T-cell (primary cell): ENCODE measurements at regions of chr11 and their contacts with region 1.

Region 1: DNA sequence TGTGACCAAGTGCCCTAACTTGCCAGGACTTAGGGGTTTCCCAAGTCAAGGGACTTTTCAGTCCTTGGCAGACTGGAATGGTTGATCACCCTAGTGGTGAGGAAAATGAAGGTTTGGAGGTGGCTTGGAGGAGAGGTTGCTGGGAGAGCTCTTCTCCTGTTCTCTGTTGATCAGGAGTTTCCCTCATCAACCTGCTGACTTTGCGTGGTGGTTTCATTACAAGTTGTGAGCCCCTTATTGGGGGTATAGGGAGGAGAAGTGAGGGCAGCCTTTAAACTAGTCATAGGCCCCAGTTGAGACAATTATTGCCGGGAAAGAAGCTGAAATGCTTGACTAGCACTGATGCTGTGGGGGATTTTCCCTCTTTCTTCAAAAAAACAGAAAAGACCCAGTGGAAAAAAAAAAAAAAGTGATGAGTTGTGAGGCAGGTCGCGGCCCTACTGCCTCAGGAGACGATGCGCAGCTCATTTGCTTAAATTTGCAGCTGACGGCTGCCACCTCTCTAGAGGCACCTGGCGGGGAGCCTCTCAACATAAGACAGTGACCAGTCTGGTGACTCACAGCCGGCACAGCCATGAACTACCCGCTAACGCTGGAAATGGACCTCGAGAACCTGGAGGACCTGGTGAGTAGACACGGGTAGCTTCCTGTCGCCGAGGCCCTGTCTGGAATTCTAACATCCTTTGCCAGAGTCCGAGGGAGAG is at the start of gene CXCR5:
- DNase-seq: peak in 6 of 35 experiments; percentile 15 to 68 (median 40)
- ATAC-seq: peak; percentile 32 to 72 (median 52)
- H3K4me3 ChIP-seq: peak within 1 kb of the TSS in 1 of 2 donors; percentile 46
- H3K4me3 Mint-ChIP-seq: peak within 1 kb of the TSS; percentile 68 to 79 (median 77)
- H3K27ac ChIP-seq: peak within 1 kb of the TSS; percentile 75
- H3K27ac Mint-ChIP-seq: peak within 1 kb of the TSS; percentile 82 to 88
- H3K4me1 ChIP-seq: peaks cover 30 to 85% of the 10 kb centered on the region in 2 experiments
- H3K4me1 Mint-ChIP-seq: peaks cover 74 to 81% (median 75%) of the 10 kb centered on the region in 3 donors
- H3K27me3 ChIP-seq: no peaks in the 10 kb centered on the region
- H3K27me3 Mint-ChIP-seq: no peaks in the 10 kb centered on the region
- total RNA-seq, gene CXCR5: 4.7 to 10.6 (median 6.3) TPM

Region 2: GRCh38 chr11:118939953-118940598 is 56.6 kb after region 1 on chr11:
- CTCF ChIA-PET with region 1: interaction called in 1 of 2 experiments, 5 read pairs
- POLR2A ChIA-PET with region 1: interaction called in 1 of 2 experiments, 11 read pairs
- DNase-seq: peak in 29 of 35 experiments; percentile 31 to 71 (median 52)
- ATAC-seq: peak; percentile 92 to 96 (median 93)
- H3K4me3 ChIP-seq: no peak overlapping the region
- H3K4me3 Mint-ChIP-seq: peak overlapping the region in 1 of 3 donors; percentile 65
- H3K27ac ChIP-seq: no peak overlapping the region
- H3K27ac Mint-ChIP-seq: peak overlapping the region in 1 of 2 donors; percentile 74
- H3K4me1 ChIP-seq: peaks cover 16 to 31% of the 10 kb centered on the region in 2 experiments
- H3K4me1 Mint-ChIP-seq: peaks cover 36 to 51% (median 47%) of the 10 kb centered on the region in 3 donors
- H3K27me3 ChIP-seq: peaks cover 0 to 2% of the 10 kb centered on the region in 2 experiments
- H3K27me3 Mint-ChIP-seq: no peaks in the 10 kb centered on the region

Region 3: DNA sequence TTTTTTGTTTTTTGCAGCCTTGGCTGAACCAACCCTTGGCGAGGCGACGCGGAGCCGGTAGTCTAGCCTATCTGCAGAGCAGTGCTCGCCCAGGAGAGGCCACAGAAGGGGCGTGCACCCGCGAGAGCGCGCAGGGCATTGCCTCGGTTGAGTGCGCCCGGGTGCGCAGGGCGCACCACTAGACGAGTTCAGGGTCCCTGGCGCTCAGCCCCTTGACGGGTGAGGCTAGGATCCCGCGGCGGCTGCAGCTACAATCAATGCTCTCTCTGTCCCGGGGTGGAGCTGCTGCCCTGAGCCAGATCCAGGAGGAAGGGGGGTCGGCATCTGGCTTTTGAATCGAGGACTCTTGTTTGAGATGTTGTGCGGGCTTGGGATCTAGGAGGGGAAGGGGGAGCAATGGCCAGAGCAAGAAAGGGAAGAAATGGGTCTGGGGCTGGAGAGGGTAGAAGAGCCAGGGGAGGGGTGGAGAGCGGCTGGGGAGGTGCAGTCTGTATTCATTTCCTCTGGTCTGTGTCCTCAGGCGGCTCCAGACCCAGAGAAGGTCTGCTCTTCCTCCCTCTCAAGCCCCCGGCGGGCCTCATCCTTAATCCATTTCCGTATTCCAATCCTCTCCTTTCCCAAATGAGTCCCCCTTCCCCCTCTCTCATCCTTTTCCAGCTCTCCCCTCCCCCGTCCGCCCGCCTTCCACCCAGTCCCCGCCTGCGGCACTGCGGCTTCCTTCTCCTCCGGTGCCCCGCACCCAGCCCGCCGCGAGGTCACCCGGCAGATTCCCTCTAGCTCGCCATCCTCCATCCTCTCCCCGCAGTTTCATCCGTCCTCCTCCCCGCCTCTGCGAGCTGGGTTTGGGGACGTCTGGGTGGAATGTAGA is 538.7 kb after region 1 on chr11:
- CTCF ChIA-PET with region 1: no interaction called
- POLR2A ChIA-PET with region 1: no interaction called
- DNase-seq: peak in 1 of 35 experiments; percentile 4
- ATAC-seq: peak in 3 of 4 experiments; percentile 26 to 32 (median 27)
- H3K4me3 ChIP-seq: peak overlapping the region in 1 of 2 donors; percentile 40
- H3K4me3 Mint-ChIP-seq: peak overlapping the region; percentile 47 to 73 (median 57)
- H3K27ac ChIP-seq: no peak overlapping the region
- H3K27ac Mint-ChIP-seq: no peak overlapping the region
- H3K4me1 ChIP-seq: peaks cover 0 to 17% of the 10 kb centered on the region in 2 experiments
- H3K4me1 Mint-ChIP-seq: peaks cover 11 to 28% (median 20%) of the 10 kb centered on the region in 3 donors
- H3K27me3 ChIP-seq: peaks cover 15 to 72% of the 10 kb centered on the region in 2 experiments
- H3K27me3 Mint-ChIP-seq: peaks cover 57 to 64% of the 10 kb centered on the region in 2 donors

Region 4: GRCh38 chr11:119891055-119891768 is 1007.7 kb after region 1 on chr11:
- CTCF ChIA-PET with region 1: no interaction called
- POLR2A ChIA-PET with region 1: no interaction called
- DNase-seq: no peak
- ATAC-seq: no peak
- H3K4me3 ChIP-seq: no peak overlapping the region
- H3K4me3 Mint-ChIP-seq: no peak overlapping the region
- H3K27ac ChIP-seq: no peak overlapping the region
- H3K27ac Mint-ChIP-seq: no peak overlapping the region
- H3K4me1 ChIP-seq: no peaks in the 10 kb centered on the region
- H3K4me1 Mint-ChIP-seq: no peaks in the 10 kb centered on the region
- H3K27me3 ChIP-seq: peaks cover 0 to 29% of the 10 kb centered on the region in 2 experiments
- H3K27me3 Mint-ChIP-seq: peaks cover 15 to 17% of the 10 kb centered on the region in 2 donors